Activated CD8-positive, alpha-beta T cell treated with anti-CD3 and anti-CD28 coated beads for 36 hours (primary cell): ENCODE measurements at regions of chr21 and their contacts with region 1.

Region 1: DNA sequence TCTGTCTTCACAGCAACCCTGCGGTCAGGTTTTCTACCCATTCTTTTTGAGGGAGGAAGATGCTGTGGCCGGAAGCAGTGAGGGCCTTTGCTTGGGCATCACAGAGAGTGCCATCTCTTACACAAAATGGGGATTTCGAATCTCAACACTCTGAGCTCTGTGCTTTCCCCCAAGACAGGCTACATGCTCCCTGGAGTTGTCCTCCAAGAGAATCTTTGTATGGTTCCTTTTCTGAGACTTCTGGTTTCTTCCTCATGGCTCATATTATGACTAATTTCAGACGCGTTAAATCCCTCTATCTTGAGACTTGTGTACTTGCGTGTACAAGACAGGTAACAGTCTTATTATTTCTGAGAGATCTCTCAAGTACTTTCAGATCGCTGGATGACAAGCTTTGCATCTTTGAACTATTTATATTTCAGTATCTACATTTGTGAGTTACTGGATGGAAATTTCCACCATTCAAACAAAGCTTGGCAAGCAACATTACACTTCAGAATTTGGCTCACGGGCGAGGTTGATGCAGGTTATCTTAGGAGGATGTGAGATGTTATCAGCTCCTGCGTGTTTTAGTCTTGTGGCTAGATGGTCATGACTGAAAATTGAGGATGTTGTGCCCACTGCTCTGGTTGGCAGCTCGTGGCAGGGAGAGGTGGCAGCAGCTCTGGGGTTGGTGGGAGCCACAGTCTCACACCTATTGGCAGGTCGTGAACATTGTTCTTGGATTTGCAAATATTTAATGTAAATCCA is 19.4 kb downstream of the ABCG1 start:
- DNase-seq: peak; percentile 65
- ATAC-seq: no peak
- H3K4me3 Mint-ChIP-seq: peak overlapping the region; percentile 45
- H3K27ac Mint-ChIP-seq: peak overlapping the region; percentile 93
- H3K4me1 Mint-ChIP-seq: peaks cover 64% of the 10 kb centered on the region
- H3K27me3 Mint-ChIP-seq: no peaks in the 10 kb centered on the region
- CTCF ChIP-seq: no peak

Region 2: DNA sequence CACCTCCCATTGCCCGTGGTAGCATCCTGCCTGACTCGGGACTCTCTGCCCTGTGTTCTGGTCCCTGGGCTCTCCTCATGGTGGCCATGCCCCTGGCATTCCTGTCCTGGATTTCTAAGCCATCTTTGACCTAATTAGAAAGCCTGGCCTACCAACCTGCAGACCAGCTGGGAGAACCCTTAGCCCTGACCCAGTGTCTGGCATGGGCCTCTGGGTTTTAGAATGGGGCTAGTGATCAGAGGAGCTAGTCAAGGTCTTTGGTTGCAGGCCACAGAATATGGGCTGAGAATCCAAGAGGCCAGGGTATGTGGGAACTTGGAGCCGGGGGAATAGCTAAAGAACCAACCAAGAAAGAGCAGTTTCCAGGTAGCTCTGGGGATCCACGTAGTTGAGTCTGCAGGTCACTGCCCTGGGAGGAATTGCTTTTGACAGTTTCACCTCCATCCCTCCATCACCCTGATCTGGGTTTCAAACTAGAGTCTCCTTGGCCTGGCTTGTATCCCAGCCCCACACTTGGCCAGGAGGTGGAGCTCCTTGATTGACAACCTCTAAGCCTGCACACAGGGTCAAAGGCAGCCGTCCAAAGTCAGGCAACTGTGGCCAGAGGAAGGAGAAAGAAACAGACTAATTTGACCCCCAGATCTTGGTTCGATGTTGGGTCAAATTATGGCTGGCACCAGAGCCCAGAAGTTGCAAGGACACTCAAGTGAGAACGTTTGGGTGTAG is 74.1 kb before region 1 on chr21:
- CTCF ChIA-PET with region 1: interaction called, 25 read pairs
- POLR2A ChIA-PET with region 1: interaction called, 3 read pairs
- intact Hi-C with region 1: no loop called
- DNase-seq: peak; percentile 78
- ATAC-seq: peak; percentile 66
- H3K4me3 Mint-ChIP-seq: no peak overlapping the region
- H3K27ac Mint-ChIP-seq: no peak overlapping the region
- H3K4me1 Mint-ChIP-seq: peaks cover 32% of the 10 kb centered on the region
- H3K27me3 Mint-ChIP-seq: no peaks in the 10 kb centered on the region
- CTCF ChIP-seq: peak; percentile 62

Region 3: DNA sequence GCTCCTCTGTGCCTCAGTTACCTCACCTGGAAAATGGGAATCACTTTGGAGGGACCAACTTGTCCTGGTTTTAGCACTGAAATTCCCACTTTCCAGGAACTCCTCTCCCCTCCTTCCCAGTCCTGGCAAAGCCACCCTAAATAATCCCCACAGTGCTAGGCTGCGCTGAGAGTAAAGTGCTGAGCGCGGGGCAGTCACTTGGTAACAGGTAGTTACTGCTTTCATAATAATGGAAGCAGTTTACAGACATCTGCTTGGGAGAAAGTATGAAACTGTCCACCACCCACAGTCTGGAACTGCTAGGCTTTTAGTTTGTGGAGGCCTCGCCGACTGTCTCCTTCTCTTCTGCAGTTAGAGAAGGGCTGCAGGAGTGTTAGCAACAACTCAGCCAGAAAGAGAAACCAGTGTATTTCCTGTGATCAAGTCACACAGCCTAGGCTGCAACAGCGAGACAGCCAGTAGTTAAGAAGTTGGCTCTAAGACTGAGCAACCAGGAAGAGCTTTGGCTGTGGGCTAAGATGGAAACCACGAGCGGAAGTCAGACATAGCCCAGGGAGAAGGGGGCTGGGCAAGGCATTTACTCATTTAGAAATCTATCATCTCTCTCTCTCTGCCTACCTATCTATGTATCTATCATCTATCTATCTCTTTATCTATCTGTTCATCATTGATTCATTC is 50.2 kb before region 1 on chr21:
- CTCF ChIA-PET with region 1: interaction called, 15 read pairs
- POLR2A ChIA-PET with region 1: interaction called, 25 read pairs
- intact Hi-C with region 1: loop called (anchors 5 kb)
- DNase-seq: peak; percentile 94
- ATAC-seq: peak; percentile 90
- H3K4me3 Mint-ChIP-seq: peak overlapping the region; percentile 62
- H3K27ac Mint-ChIP-seq: peak overlapping the region; percentile 95
- H3K4me1 Mint-ChIP-seq: peaks cover 67% of the 10 kb centered on the region
- H3K27me3 Mint-ChIP-seq: no peaks in the 10 kb centered on the region
- CTCF ChIP-seq: no peak

Region 4: GRCh38 chr21:42220138-42220701 is 18.1 kb before region 1 on chr21:
- CTCF ChIA-PET with region 1: interaction called, 24 read pairs
- POLR2A ChIA-PET with region 1: interaction called, 110 read pairs
- intact Hi-C with region 1: no loop called
- DNase-seq: peak; percentile 84
- ATAC-seq: peak; percentile 84
- H3K4me3 Mint-ChIP-seq: peak overlapping the region; percentile 85
- H3K27ac Mint-ChIP-seq: peak overlapping the region; percentile 91
- H3K4me1 Mint-ChIP-seq: peaks cover 20% of the 10 kb centered on the region
- H3K27me3 Mint-ChIP-seq: no peaks in the 10 kb centered on the region
- CTCF ChIP-seq: no peak

Region 5: GRCh38 chr21:42227909-42228708 is 10.3 kb before region 1 on chr21:
- CTCF ChIA-PET with region 1: interaction called, 15 read pairs
- POLR2A ChIA-PET with region 1: interaction called, 20 read pairs
- intact Hi-C with region 1: no loop called
- DNase-seq: peak; percentile 97
- ATAC-seq: peak; percentile 97
- H3K4me3 Mint-ChIP-seq: peak overlapping the region; percentile 53
- H3K27ac Mint-ChIP-seq: peak overlapping the region; percentile 92
- H3K4me1 Mint-ChIP-seq: peaks cover 72% of the 10 kb centered on the region
- H3K27me3 Mint-ChIP-seq: no peaks in the 10 kb centered on the region
- CTCF ChIP-seq: no peak

Region 6: DNA sequence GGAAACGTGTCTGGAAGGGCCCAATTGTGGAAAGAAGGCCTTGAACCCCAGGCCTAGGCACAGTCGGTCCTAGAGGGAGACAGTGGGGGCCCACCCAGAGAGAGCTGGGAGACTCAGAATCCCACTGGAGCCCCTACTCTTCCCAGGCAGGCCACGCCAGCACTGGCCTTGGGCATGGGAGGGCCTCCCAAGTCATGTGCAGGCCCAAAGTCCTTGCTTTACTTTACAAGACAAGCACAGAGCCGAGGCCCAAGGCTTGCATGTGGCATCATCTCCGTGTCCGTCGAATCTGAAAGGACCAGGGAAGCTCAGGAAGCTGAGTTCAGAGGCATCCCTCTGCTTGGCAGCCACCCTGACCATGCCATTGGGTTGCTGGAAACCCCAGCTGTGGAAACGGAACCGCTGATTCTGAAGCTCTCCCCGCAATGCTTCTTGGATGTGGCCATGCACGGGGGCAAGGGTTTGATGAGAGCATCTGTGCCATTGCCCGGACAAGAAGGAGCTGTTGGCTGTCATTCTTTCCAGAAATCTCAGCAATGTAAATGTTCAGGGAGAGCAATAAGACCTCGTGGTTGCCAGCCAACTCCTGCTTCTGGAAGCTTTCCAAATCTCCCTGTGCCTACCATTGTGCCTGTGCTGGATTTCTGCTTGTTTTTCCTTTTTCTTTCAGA is 13.4 kb after region 1 on chr21:
- CTCF ChIA-PET with region 1: interaction called, 4 read pairs
- POLR2A ChIA-PET with region 1: interaction called, 15 read pairs
- intact Hi-C with region 1: no loop called
- DNase-seq: no peak
- ATAC-seq: no peak
- H3K4me3 Mint-ChIP-seq: no peak overlapping the region
- H3K27ac Mint-ChIP-seq: no peak overlapping the region
- H3K4me1 Mint-ChIP-seq: peaks cover 17% of the 10 kb centered on the region
- H3K27me3 Mint-ChIP-seq: no peaks in the 10 kb centered on the region
- CTCF ChIP-seq: no peak

Region 7: GRCh38 chr21:42520628-42521253 is 282.4 kb after region 1 on chr21:
- CTCF ChIA-PET with region 1: no interaction called
- POLR2A ChIA-PET with region 1: no interaction called
- intact Hi-C with region 1: no loop called
- DNase-seq: no peak
- ATAC-seq: no peak
- H3K4me3 Mint-ChIP-seq: no peak overlapping the region
- H3K27ac Mint-ChIP-seq: no peak overlapping the region
- H3K4me1 Mint-ChIP-seq: peaks cover 29% of the 10 kb centered on the region
- H3K27me3 Mint-ChIP-seq: no peaks in the 10 kb centered on the region
- CTCF ChIP-seq: no peak